Vagina (tissue), 2 donors: ENCODE measurements at regions of chr2 and their contacts with region 1.

Region 1: GRCh38 chr2:210002158-210003157 is at the start of gene RPE:
- DNase-seq: peak in 1 of 2 donors; percentile 95
- H3K4me3 ChIP-seq: peak within 1 kb of the TSS; percentile 79 to 83
- H3K27ac ChIP-seq: peak within 1 kb of the TSS; percentile 69
- H3K4me1 ChIP-seq: peaks cover 40% of the 10 kb centered on the region
- H3K27me3 ChIP-seq: no peaks in the 10 kb centered on the region
- CTCF ChIP-seq: no peak
- POLR2A ChIP-seq: no peak
- total RNA-seq, gene RPE: 73.2 TPM

Region 2: GRCh38 chr2:209960676-209961630 is 41.5 kb before region 1 on chr2:
- intact Hi-C with region 1: no loop called
- DNase-seq: no peak
- H3K4me3 ChIP-seq: no peak overlapping the region
- H3K27ac ChIP-seq: no peak overlapping the region
- H3K4me1 ChIP-seq: no peaks in the 10 kb centered on the region
- H3K27me3 ChIP-seq: no peaks in the 10 kb centered on the region
- CTCF ChIP-seq: no peak
- POLR2A ChIP-seq: no peak

Region 3: DNA sequence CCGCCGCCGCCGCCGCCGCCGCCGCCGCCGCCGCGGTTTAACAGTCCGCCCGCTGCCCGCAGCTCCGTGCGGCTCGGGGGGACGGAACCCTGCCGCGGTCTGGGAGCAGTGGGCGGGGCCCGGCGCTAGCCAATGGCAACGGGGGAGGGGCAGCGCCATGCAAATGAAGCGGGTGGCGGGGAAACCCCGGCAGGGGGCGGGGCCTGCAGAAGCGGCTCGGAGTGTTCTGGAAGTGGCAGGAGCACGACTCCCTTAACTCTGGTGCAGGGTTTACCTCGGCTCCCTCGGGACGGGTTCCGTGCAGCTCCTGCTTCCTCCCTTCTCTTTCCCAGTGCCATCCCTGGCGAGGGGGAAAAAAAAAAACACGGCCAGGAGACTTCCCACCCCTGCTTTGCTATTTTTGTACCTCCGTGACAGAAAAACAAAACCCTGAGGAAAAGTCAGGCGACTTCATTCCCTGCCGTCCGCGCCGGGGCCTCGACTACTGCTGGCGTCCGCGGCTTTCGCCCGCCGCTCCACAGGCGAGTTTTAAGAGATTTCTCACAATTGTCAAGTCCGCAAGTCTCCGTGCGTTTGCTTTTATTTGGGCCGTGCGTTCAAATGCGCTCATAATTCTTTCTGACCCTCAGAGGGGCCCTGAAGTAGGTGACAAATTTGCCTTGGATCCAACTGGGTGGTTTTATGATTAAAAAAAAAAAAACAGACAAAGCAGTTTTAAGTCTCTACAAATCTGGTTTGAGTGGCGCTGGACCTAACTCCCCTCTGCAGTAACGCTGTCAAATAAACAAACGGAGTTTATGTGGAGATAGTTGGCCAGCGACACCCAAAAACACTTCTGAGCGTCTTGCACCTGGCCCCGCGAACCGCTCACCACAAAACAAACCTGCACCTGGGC is 169.1 kb after region 1 on chr2 and contains the start of gene KANSL1L:
- intact Hi-C with region 1: loop called (anchors 10 kb)
- DNase-seq: peak; percentile 97 to 99
- H3K4me3 ChIP-seq: peak within 1 kb of the TSS; percentile 92 to 98
- H3K27ac ChIP-seq: peak within 1 kb of the TSS; percentile 100
- H3K4me1 ChIP-seq: peaks cover 37% of the 10 kb centered on the region
- H3K27me3 ChIP-seq: no peaks in the 10 kb centered on the region
- CTCF ChIP-seq: no peak
- POLR2A ChIP-seq: peak; percentile 71 to 95
- total RNA-seq, gene KANSL1L: 29.7 TPM